Right ventricle myocardium superior (tissue), 1 donor: ENCODE measurements at regions of chr20 and their contacts with region 1.

Region 1: DNA sequence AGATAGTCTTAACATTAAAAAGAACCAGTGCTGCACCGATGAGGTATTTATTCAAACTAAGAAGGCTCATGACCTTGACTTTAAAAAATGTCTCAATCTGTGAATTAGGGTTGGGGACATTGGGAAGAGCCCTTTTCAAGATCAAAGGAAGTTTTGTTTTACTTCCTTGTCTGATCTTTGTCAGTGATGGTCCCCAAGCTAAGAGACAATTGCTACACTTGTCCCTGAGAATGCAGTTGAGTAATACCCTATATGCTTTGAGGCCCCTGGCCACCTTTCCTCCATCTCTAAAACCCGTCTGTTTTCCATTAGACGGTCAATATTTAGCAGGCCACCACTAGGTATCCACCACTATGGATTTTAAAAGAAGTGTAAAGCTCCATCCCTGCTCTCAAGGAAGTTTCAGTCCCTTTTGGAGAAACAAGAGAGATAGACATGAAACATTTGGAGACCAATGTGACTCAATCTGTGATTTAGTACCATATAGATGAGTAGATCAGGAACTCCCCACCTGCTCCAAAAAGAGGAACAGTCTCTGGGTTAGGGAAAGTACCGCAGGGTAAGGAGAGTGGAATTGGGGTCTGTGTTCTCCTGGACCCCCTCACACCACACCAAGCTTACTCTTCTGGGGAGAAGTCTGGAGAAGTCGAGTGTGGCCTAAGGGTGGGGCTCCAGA is 99.1 kb upstream of the ISM1 start:
- DNase-seq: no peak
- ATAC-seq: no peak

Region 2: GRCh38 chr20:12229891-12230290 is 892.1 kb before region 1 on chr20:
- intact Hi-C with region 1: no loop called
- DNase-seq: no peak
- ATAC-seq: no peak

Region 3: DNA sequence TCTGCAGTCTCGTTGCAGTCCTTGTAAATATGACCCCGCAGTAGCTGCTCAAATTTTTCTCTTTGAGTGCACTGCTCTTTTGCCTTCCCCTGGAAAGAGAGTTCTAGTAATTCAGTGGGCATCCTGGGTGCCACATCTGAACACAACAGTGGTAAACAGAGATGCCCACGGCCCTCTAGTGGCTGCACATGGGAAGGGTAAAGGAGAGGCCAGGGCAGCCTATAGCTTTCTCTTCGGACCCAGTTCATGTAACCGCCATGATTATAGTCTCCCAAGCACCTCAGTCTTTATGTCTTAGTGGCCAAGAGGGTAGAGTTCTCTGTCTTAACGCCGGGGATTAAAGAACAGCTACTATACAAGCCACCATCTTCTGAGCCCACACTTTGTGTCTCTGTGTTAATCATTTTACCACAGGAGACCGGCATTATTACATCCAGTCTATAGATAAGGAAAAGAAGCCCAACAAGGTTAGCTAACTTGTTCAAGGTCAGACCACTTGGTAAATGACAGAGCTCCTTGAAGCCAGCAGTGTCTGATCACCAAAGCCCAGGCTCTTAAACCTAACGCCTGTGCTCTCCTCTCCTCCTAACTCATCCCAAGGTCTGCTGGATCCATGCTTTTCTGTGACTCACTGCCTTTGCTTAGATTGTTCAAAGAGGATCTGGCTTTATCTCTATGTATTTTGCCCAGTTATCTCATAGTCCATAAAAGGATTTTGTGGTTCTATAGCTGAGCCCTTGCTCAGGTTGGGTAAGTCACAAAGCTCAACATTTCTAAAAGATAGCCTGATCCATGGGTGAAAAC is 180.9 kb after region 1 on chr20:
- intact Hi-C with region 1: loop called (anchors 10 kb)
- DNase-seq: no peak
- ATAC-seq: no peak

Region 4: DNA sequence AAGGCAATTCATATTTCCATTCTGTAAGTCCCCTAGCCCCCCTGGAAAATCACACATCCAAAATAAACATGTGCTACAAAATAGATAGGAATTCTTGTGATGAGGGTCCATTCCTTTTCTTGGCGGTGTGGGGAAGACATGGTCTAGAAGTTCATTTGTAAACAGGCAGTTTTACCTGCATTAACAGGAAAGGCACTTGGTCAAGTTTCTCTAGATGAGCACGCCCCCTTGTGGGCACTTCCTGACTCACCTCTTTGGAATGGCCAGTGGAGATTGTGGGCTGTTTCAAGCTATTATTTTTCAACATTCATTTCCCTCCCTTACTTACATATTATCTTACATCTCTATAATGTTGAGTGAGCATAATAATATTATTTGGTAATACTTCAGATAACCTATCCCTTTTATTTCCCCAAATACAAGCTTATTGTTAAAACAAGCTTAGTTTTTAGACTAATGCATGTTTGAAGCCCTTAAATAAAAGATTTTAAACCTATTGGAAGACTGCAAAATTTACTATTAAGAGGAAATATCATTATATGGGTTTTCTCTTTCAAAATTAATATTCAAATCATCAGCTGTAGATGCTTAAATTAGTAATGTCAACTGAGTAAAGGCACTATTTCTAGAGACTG is 424.6 kb after region 1 on chr20:
- intact Hi-C with region 1: loop called (anchors 10 kb)
- DNase-seq: peak; percentile 82
- ATAC-seq: peak; percentile 52